GM12878 (cell line): ENCODE measurements at regions of chr2 and their contacts with region 1.

Region 1: DNA sequence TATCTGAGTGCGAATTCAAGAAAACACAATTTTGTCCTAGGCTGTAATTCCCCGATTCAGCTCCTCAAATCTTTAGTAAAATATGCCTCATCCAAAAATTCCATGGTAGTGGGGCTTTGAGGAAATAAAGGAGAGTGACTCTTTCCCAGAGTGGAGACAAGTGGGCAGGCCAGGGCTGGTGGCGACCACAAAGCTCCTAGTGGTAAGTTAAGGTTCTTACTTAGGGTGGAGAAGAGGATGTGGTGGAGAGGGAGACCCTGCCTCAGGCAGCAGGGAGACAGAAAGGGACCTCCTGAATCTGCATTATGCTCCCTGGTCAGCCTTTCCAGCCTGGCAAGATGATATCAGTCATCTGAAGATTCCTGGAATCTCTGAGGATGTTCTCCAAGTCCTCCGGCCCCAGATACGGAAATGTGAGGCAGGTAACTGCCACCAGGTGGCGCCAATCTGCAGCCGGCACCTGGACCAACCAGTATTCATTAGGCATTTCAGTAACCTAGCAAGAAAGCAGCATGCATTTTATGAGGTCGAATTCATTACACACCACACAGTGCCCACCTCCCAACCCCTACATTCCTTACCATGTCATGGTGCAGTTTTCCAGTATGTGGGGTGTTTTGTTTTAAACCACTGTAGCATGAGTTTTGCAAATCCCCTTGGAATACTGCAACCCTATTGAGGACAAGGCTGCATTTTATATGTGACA is 106.4 kb downstream of the POLE4 start:
- DNase-seq: no peak
- ATAC-seq: peak; percentile 91
- H3K4me3 ChIP-seq: no peak overlapping the region
- H3K27ac ChIP-seq: no peak overlapping the region
- H3K4me1 ChIP-seq: no peaks in the 10 kb centered on the region
- H3K27me3 ChIP-seq: no peaks in the 10 kb centered on the region
- CTCF ChIP-seq: peak; percentile 67 to 92 (median 89)
- EP300 ChIP-seq: no peak
- POLR2A ChIP-seq: no peak
- RAD21 ChIP-seq: peak; percentile 78

Region 2: GRCh38 chr2:74789271-74789670 is 275.6 kb before region 1 on chr2:
- CTCF ChIA-PET with region 1: no interaction called
- POLR2A ChIA-PET with region 1: no interaction called
- RAD21 ChIA-PET with region 1: no interaction called
- SMC1A ChIA-PET with region 1: no interaction called
- in situ Hi-C with region 1: no loop called
- intact Hi-C with region 1: no loop called
- DNase-seq: no peak
- ATAC-seq: no peak
- H3K4me3 ChIP-seq: no peak overlapping the region
- H3K27ac ChIP-seq: no peak overlapping the region
- H3K4me1 ChIP-seq: no peaks in the 10 kb centered on the region
- H3K27me3 ChIP-seq: no peaks in the 10 kb centered on the region
- CTCF ChIP-seq: no peak
- EP300 ChIP-seq: no peak
- POLR2A ChIP-seq: no peak
- RAD21 ChIP-seq: no peak

Region 3: DNA sequence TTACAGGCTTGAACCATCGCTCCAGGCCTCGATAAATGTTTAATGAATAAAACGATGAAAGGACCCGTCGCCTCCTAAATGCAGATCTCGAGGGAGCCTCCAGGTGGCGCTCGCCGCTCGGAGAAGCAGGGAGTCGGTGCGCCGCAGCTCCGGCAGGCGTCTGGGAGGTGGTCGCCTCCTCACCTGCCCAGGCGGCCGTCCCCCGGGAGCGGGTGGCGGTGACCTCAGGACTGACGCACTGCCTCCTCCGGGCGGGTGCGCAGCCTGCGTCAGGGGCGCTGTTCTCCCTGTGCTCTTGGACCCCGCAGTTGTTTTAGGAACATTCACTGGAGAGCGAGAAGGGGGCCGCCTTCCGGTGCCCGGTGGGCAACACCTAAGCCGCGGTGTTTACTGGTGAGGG is 145.0 kb before region 1 on chr2:
- CTCF ChIA-PET with region 1: interaction called, 17 read pairs
- POLR2A ChIA-PET with region 1: no interaction called
- RAD21 ChIA-PET with region 1: interaction called, 3 read pairs
- SMC1A ChIA-PET with region 1: interaction called, 4 read pairs
- in situ Hi-C with region 1: no loop called
- intact Hi-C with region 1: no loop called
- DNase-seq: no peak
- ATAC-seq: peak; percentile 77
- H3K4me3 ChIP-seq: no peak overlapping the region
- H3K27ac ChIP-seq: no peak overlapping the region
- H3K4me1 ChIP-seq: peaks cover 6% of the 10 kb centered on the region; the same call in 1 of the 2 replicates
- H3K27me3 ChIP-seq: no peaks in the 10 kb centered on the region
- CTCF ChIP-seq: peak; percentile 69 to 85 (median 84)
- EP300 ChIP-seq: no peak
- POLR2A ChIP-seq: no peak
- RAD21 ChIP-seq: peak; percentile 95

Region 4: GRCh38 chr2:75076088-75076487 is 11.2 kb after region 1 on chr2:
- CTCF ChIA-PET with region 1: interaction called, 95 read pairs
- POLR2A ChIA-PET with region 1: no interaction called
- RAD21 ChIA-PET with region 1: interaction called, 50 read pairs
- SMC1A ChIA-PET with region 1: interaction called, 39 read pairs
- in situ Hi-C with region 1: no loop called
- intact Hi-C with region 1: no loop called
- DNase-seq: no peak
- ATAC-seq: no peak
- H3K4me3 ChIP-seq: no peak overlapping the region
- H3K27ac ChIP-seq: no peak overlapping the region
- H3K4me1 ChIP-seq: peaks cover 8% of the 10 kb centered on the region
- H3K27me3 ChIP-seq: no peaks in the 10 kb centered on the region
- CTCF ChIP-seq: no peak
- EP300 ChIP-seq: no peak
- POLR2A ChIP-seq: no peak
- RAD21 ChIP-seq: no peak

Region 5: GRCh38 chr2:75157430-75157829 is 92.6 kb after region 1 on chr2:
- CTCF ChIA-PET with region 1: interaction called, 8 read pairs
- POLR2A ChIA-PET with region 1: no interaction called
- RAD21 ChIA-PET with region 1: no interaction called
- SMC1A ChIA-PET with region 1: interaction called, 14 read pairs
- in situ Hi-C with region 1: no loop called
- intact Hi-C with region 1: no loop called
- DNase-seq: no peak
- ATAC-seq: peak; percentile 45; the same call in 2 of the 3 replicates
- H3K4me3 ChIP-seq: no peak overlapping the region
- H3K27ac ChIP-seq: no peak overlapping the region
- H3K4me1 ChIP-seq: no peaks in the 10 kb centered on the region
- H3K27me3 ChIP-seq: no peaks in the 10 kb centered on the region
- CTCF ChIP-seq: peak in 2 of 3 experiments; percentile 15 to 25; a peak in 2 of 6 replicates
- EP300 ChIP-seq: no peak
- POLR2A ChIP-seq: no peak
- RAD21 ChIP-seq: peak; percentile 43; the same call in 1 of the 2 replicates

Region 6: DNA sequence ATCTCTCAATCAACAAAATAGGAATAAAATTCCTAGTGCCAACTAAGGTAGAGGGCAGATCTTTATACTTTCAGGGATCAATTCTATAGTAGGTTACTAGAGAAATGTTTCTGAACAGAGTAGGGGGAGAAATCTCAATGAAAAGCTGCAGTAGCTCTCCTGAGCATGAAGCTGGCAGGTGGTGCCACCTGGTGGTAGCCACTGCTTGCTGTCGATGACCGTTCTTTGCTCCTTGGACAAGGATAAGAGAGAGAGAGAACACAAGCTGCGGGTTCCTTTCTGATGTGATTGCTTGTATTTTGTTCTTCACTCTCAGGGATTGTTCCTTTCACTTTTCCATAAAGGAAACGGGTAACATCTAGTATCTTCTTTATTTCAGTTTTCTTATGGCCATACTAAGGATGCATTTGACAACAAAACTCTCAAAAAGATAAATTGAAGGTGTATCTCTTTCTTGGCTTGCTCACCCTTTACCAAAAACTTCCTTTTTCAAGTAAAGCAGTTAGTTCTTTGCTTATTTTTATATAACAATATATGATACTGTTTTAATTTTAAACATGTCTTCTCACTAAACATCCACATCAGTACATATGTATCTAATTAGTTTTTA is 563.2 kb after region 1 on chr2:
- CTCF ChIA-PET with region 1: interaction called, 7 read pairs
- POLR2A ChIA-PET with region 1: no interaction called
- RAD21 ChIA-PET with region 1: interaction called, 7 read pairs
- SMC1A ChIA-PET with region 1: interaction called, 3 read pairs
- in situ Hi-C with region 1: no loop called
- intact Hi-C with region 1: loop called (anchors 5 kb)
- DNase-seq: no peak
- ATAC-seq: peak; percentile 96
- H3K4me3 ChIP-seq: no peak overlapping the region
- H3K27ac ChIP-seq: no peak overlapping the region
- H3K4me1 ChIP-seq: no peaks in the 10 kb centered on the region
- H3K27me3 ChIP-seq: peaks cover 0 to 2% of the 10 kb centered on the region in 2 experiments; a peak in 1 of 4 replicates
- CTCF ChIP-seq: peak; percentile 86 to 97 (median 91)
- EP300 ChIP-seq: no peak
- POLR2A ChIP-seq: no peak
- RAD21 ChIP-seq: peak; percentile 80